Activated CD4-positive, alpha-beta memory T cell treated with anti-CD3 and anti-CD28 coated beads for 36 hours (primary cell): ENCODE measurements at regions of chr1 and their contacts with region 1.

Region 1: GRCh38 chr1:222713091-222713961 is 962 bp downstream of the BROX start:
- DNase-seq: peak; percentile 94
- H3K4me3 Mint-ChIP-seq: peak overlapping the region; percentile 97
- H3K27ac Mint-ChIP-seq: peak overlapping the region; percentile 98
- H3K4me1 Mint-ChIP-seq: peaks cover 47% of the 10 kb centered on the region
- H3K27me3 Mint-ChIP-seq: no peaks in the 10 kb centered on the region

Region 2: DNA sequence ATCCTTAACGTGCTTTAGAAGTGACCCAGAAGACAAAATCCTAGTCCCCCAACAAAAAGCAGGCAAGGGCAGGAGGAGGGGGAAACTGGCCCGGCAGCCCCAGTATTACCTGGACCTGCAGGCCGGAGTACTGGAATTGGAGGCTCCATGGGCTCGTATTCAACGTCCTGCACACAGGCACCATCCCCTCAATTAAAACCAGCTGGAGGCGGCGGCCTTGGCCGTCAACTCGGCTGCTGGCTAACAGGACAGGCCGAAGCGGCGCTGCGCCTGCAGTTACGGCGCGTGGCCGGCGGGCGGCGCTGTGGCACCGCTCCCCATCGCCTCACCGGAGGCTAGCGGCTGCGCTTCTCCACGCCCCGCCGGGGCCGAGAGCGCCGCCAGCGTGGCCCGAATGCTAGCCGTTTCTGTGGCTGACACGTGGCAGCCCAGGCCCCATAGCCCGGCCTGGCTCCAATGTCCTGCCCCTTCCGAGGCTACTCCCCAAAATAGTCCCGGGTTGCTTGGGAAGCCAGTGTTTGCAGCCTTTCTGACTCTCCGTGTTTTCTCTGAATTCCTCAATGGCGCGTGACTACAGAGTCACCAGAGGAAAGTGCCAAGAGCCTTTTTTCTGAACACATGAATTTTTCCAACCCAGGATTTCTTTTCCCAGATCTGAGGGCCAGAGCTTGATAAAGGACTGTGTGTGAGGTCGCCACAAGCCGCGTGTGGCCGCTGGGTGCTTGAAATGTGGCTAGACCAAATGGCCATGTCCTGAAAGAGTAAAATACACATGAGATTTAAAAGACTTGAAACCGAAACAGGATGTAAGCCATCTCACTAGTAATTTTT is 247.9 kb before region 1 on chr1:
- CTCF ChIA-PET with region 1: interaction called, 5 read pairs
- POLR2A ChIA-PET with region 1: interaction called, 3 read pairs
- intact Hi-C with region 1: loop called (anchors 1 kb)
- DNase-seq: peak; percentile 87
- H3K4me3 Mint-ChIP-seq: peak overlapping the region; percentile 79
- H3K27ac Mint-ChIP-seq: peak overlapping the region; percentile 72
- H3K4me1 Mint-ChIP-seq: peaks cover 10% of the 10 kb centered on the region
- H3K27me3 Mint-ChIP-seq: no peaks in the 10 kb centered on the region

Region 3: DNA sequence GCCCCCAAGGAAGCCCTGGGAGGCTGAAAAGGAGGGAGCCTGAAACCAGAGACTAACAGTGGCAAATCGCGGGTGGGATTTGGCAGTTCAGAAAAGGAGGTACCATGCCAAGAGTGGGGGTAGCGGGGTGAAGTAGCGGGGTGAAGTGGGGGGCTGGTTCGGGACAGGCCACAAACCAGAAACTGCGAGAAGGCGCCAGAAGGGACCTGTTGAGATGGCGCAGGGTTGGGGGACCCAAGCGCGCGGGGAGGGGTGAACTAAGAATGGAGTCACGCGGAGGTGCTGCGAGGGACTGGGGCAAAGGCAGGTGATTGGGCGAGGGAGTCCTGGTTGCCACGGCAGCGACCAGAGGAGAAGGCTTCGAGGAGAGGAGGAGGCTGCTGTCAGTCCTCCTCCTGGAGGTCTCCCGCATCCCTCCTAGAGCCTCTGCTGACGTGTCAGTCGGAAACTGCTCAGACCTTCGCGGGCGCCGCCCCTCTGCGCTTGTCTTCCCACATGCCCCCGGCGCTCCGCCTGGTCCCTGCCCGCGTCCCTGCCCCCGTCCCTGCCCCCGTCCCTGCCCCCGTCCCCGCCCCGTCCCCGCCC is 95.9 kb before region 1 on chr1:
- CTCF ChIA-PET with region 1: no interaction called
- POLR2A ChIA-PET with region 1: no interaction called
- intact Hi-C with region 1: loop called (anchors 1 kb)
- DNase-seq: peak; percentile 93
- H3K4me3 Mint-ChIP-seq: peak overlapping the region; percentile 79
- H3K27ac Mint-ChIP-seq: peak overlapping the region; percentile 63
- H3K4me1 Mint-ChIP-seq: peaks cover 24% of the 10 kb centered on the region
- H3K27me3 Mint-ChIP-seq: peaks cover 15% of the 10 kb centered on the region

Region 4: GRCh38 chr1:222654849-222655248 is 58.5 kb before region 1 on chr1:
- CTCF ChIA-PET with region 1: interaction called, 4 read pairs
- POLR2A ChIA-PET with region 1: interaction called, 8 read pairs
- intact Hi-C with region 1: loop called (anchors 2 kb)
- DNase-seq: peak; percentile 81
- H3K4me3 Mint-ChIP-seq: peak overlapping the region; percentile 14
- H3K27ac Mint-ChIP-seq: peak overlapping the region; percentile 64
- H3K4me1 Mint-ChIP-seq: peaks cover 49% of the 10 kb centered on the region
- H3K27me3 Mint-ChIP-seq: no peaks in the 10 kb centered on the region

Region 5: DNA sequence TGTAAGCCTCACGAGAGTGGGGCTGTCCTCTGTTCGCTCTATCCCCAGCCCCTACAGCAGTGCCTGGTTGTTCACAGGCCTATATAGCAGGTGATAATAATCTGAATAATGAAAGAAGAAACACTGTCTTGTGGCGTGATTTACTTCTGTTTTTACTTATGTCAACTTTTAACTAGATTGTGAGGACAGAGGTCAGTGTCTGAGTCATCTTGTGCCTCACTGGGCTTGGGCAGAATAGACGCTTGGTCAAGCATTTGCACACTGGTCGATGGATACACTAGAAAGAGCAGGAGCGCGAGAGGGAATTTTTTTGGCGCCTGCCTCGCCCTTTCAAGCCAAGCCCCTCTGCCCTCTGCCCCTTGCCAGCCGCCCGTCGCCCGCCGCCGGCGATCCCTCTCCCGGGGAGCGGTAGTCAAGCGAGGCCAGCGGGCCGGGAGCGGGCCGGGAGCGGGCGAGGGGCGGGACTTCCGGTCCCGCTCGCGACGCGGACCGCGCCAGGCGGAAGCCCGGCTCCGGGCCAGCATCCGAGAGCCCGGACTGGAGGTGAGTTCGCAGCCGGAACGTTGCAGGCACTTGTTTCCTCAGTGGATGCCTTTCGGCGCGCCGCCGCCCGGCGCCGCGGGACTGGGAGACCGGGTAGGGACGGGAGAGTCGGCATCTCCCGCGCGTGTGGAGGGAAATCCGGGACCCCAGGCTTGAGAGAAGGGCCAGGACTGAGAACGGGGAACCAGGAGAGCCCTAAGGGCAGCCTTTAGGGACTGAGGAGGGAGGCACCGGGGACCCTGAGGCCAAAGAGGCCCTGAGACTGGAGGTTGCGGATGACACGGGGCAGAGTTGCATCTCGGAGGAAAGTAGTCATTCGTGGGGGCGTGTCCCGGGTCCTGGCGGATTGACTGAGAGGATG is 101.5 kb after region 1 on chr1 and contains the start of gene DISP1:
- CTCF ChIA-PET with region 1: no interaction called
- POLR2A ChIA-PET with region 1: no interaction called
- intact Hi-C with region 1: loop called (anchors 1 kb)
- DNase-seq: peak; percentile 87
- H3K4me3 Mint-ChIP-seq: peak within 1 kb of the TSS; percentile 89
- H3K27ac Mint-ChIP-seq: peak within 1 kb of the TSS; percentile 85
- H3K4me1 Mint-ChIP-seq: peaks cover 26% of the 10 kb centered on the region
- H3K27me3 Mint-ChIP-seq: peaks cover 1% of the 10 kb centered on the region
- total RNA-seq, gene DISP1: 0.81 to 1.1 TPM

Region 6: DNA sequence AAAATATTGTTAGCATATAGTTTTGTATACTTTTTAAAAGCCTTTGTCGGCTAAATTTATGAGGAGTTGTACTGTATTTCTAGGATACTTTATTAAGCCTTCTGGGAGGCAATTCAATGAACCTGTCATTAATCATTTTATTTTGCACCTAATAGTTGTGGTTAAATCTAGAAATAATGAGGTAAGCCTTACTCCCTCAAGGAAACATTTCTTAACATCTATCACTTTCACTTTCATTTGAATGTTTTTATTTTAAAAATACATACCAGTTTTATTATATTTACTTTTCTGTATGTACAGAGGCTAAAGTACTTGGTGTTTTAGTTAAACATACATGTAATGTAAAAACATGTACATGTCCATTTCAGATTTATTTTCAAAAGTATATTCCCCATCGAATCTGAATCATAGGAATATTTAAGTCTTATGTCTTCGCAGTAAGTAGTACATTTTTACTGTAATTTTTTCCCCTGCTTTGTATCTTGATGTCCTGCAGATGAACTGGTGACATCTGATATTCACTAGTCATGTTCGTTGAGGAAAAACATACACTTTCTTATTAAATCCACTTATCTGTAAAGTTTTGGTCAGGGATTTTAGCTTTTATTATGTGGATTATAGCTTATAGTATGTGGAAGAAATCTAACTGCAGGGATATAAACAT is 184.3 kb after region 1 on chr1:
- CTCF ChIA-PET with region 1: no interaction called
- POLR2A ChIA-PET with region 1: no interaction called
- intact Hi-C with region 1: no loop called
- DNase-seq: no peak
- H3K4me3 Mint-ChIP-seq: no peak overlapping the region
- H3K27ac Mint-ChIP-seq: no peak overlapping the region
- H3K4me1 Mint-ChIP-seq: peaks cover 15% of the 10 kb centered on the region
- H3K27me3 Mint-ChIP-seq: no peaks in the 10 kb centered on the region